Heart left ventricle (tissue), 16 donors: ENCODE measurements at regions of chr9 and their contacts with region 1.

Region 1: GRCh38 chr9:108761655-108762347 is 94.0 kb downstream of the ACTL7B start:
- DNase-seq: peak in 4 of 5 donors; percentile 33 to 60 (median 50)
- ATAC-seq: peak; percentile 37 to 80 (median 78)
- H3K4me3 ChIP-seq: no peak overlapping the region
- H3K27ac ChIP-seq: no peak overlapping the region
- H3K4me1 ChIP-seq: peaks cover 0 to 9% (median 0%) of the 10 kb centered on the region in 12 donors
- H3K27me3 ChIP-seq: no peaks in the 10 kb centered on the region
- CTCF ChIP-seq: peak; percentile 79 to 94 (median 86)
- POLR2A ChIP-seq: no peak

Region 2: DNA sequence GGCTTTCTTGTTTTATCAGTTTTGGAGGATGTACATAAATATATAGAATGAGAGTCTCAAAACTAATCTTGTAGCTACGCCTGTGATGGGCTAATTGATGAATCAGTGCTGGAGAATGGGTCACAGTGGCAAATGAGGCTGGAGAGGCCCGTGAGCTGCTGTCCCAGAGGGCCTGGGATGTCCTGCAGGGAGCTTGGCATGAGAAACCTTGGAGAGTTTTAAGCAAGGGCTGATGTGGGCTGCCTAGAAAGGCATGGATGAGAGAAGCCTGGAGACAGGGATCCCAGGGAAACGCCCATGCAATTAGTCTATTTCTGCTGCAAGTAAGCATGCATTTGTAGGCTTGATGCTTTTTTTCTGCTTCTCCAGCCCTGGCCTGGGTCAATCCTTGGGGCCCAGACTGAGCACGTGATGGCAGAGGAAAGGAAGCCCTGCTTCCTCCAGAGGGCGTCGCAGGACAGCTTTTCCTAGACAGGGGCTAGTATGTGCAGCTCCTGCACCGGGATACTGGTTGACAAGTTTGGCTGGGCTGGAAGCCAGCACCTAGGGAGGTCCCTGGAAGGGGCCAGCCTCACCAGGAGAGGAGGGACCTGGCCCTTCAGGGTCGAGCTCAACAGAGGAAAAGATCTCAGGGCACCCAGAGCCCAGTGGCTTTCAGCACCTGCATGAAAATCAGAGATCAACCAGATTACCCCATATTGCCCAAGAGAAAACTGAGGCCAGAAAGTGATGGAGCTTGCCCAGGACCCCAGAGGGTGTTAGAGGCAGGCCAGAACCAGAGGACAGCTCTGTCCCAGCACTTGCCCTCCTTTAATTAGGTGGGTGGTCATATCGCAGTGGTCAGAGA is 1339.6 kb before region 1 on chr9:
- intact Hi-C with region 1: loop called in 3 of 10 experiments (anchors 2 to 5 kb)
- DNase-seq: peak; percentile 54 to 81 (median 64)
- ATAC-seq: peak; percentile 56 to 84 (median 79)
- H3K4me3 ChIP-seq: no peak overlapping the region
- H3K27ac ChIP-seq: no peak overlapping the region
- H3K4me1 ChIP-seq: peaks cover 0 to 24% (median 8%) of the 10 kb centered on the region in 12 donors
- H3K27me3 ChIP-seq: no peaks in the 10 kb centered on the region
- CTCF ChIP-seq: peak; percentile 27 to 69 (median 59)
- POLR2A ChIP-seq: no peak

Region 3: DNA sequence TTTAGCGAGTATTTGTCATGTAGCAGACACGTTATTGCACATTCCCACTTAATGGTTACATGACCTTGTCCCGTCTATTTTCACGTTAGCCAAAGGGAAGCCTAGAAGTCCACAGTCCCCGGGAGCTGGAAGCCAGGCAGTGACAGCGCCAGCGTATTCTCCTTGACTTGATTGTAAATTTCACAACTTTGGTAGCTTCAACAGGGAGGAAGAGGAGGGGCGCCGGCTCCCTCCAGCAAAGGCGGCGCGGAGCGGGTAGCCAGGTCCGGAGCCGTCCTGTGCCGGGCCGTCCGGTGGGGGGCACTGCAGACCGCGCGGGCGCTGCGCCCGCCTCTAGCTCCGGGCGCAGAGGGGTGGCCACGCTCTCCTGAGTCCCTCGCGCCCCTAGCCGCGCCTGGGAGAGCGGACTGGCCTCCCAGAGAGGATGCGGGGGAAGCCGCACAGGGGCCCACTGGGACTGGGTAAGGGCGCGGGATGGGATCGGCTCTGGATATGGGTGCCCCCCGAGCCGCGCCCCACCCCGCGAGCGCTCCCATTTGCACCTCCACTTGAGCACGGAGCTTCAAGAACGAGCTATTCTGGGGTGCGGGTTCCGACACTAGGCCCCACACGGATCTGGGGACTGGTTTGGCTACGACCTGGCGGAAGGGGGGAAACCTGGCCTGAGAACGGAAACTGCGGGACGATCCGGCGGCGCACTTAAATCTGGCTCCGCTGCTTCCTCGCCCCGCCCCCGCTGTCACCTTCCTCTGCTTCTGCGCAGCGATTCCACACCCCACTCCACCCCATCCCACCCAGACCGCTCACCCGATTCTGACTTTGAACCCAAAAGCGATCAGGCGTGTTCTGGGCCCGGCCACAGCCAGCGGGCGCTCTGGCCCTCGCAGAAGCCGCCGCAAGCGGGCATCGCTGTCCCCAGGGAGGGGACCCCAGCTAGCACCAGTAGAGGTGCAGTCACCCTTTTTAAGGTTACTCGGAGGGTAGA is 1296.0 kb before region 1 on chr9:
- intact Hi-C with region 1: loop called in 6 of 10 experiments (anchors 5 to 10 kb)
- DNase-seq: peak; percentile 65 to 87 (median 72)
- ATAC-seq: peak; percentile 88 to 99 (median 98)
- H3K4me3 ChIP-seq: peak overlapping the region; percentile 38 to 83 (median 70)
- H3K27ac ChIP-seq: peak overlapping the region in 5 of 12 donors; percentile 51 to 69 (median 58)
- H3K4me1 ChIP-seq: peaks cover 0 to 15% (median 4%) of the 10 kb centered on the region in 12 donors
- H3K27me3 ChIP-seq: no peaks in the 10 kb centered on the region
- CTCF ChIP-seq: peak; percentile 84 to 97 (median 90)
- POLR2A ChIP-seq: no peak

Region 4: GRCh38 chr9:107484117-107484723 is 1277.6 kb before region 1 on chr9:
- intact Hi-C with region 1: loop called in 3 of 10 experiments (anchors 5 kb)
- DNase-seq: peak in 2 of 5 donors; percentile 41 to 44
- ATAC-seq: peak; percentile 53 to 69 (median 62)
- H3K4me3 ChIP-seq: peak overlapping the region in 11 of 12 donors; percentile 13 to 92 (median 80)
- H3K27ac ChIP-seq: peak overlapping the region in 9 of 12 donors; percentile 6 to 97 (median 94)
- H3K4me1 ChIP-seq: peaks cover 0 to 40% (median 2%) of the 10 kb centered on the region in 12 donors
- H3K27me3 ChIP-seq: peaks cover 0 to 16% (median 0%) of the 10 kb centered on the region in 9 donors
- CTCF ChIP-seq: peak; percentile 23 to 78 (median 61)
- POLR2A ChIP-seq: no peak

Region 5: DNA sequence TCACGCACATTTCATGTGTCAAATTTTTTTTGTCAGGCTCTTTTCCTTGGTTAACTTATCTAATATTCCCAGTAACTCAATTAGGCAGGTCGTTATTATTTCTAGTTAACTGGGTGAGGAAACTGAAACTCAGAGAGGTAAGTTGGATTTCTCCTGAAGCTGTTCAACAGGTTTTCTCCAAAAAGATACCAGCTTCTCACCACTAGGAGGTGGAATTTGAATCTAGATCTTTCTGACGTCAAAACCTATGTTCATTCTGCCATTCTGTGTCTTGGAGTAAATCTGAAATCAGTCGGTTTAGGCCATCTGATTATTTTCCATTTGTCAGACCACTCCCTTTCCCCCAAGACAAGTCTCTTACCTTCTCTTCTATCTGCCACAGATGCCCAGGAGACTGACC is 478.9 kb before region 1 on chr9:
- intact Hi-C with region 1: loop called in 1 of 10 experiments (anchors 10 kb)
- DNase-seq: no peak
- ATAC-seq: no peak
- H3K4me3 ChIP-seq: no peak overlapping the region
- H3K27ac ChIP-seq: no peak overlapping the region
- H3K4me1 ChIP-seq: no peaks in the 10 kb centered on the region
- H3K27me3 ChIP-seq: no peaks in the 10 kb centered on the region
- CTCF ChIP-seq: peak in 4 of 12 donors; percentile 9 to 23 (median 14)
- POLR2A ChIP-seq: no peak

Region 6: GRCh38 chr9:108691614-108692013 is 70.2 kb before region 1 on chr9:
- intact Hi-C with region 1: loop called in 1 of 10 experiments (anchors 10 kb)
- DNase-seq: no peak
- ATAC-seq: no peak
- H3K4me3 ChIP-seq: no peak overlapping the region
- H3K27ac ChIP-seq: no peak overlapping the region
- H3K4me1 ChIP-seq: no peaks in the 10 kb centered on the region
- H3K27me3 ChIP-seq: no peaks in the 10 kb centered on the region
- CTCF ChIP-seq: no peak
- POLR2A ChIP-seq: no peak